Caco-2 (cell line): ENCODE measurements at regions of chrX and their contacts with region 1.

Region 1: DNA sequence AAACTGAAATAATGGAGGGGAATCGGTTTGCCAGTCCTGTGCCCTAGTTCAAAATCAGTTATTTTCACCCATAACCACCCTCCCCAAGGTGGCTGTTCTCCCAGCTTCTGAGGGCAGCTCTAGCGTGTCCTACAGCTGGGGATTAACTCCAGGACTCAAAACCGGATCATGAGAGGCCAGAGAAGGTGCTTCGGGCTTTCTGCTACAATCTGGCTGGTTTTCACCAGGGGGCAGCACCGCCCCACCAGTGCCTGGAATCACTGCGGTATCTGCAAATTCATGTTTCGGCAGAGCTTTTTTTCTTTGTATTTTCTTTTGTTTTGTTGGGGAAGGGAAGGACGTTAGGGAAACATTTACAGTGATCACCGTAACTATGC is 28.4 kb downstream of the PDHA1 start:
- DNase-seq: peak; percentile 55 to 72
- H3K4me3 ChIP-seq: peak overlapping the region; percentile 26
- H3K4me3 Mint-ChIP-seq: peak overlapping the region; percentile 63
- H3K27ac Mint-ChIP-seq: peak overlapping the region; percentile 24
- H3K4me1 ChIP-seq: no peaks in the 10 kb centered on the region
- H3K4me1 Mint-ChIP-seq: no peaks in the 10 kb centered on the region
- H3K27me3 ChIP-seq: no peaks in the 10 kb centered on the region
- H3K27me3 Mint-ChIP-seq: no peaks in the 10 kb centered on the region
- CTCF ChIP-seq: peak; percentile 66 to 72

Region 2: GRCh38 chrX:18129690-18130089 is 1242.5 kb before region 1 on chrX:
- CTCF ChIA-PET with region 1: no interaction called
- POLR2A ChIA-PET with region 1: no interaction called
- intact Hi-C with region 1: no loop called
- DNase-seq: no peak
- H3K4me3 ChIP-seq: no peak overlapping the region
- H3K4me3 Mint-ChIP-seq: no peak overlapping the region
- H3K27ac Mint-ChIP-seq: no peak overlapping the region
- H3K4me1 ChIP-seq: no peaks in the 10 kb centered on the region
- H3K4me1 Mint-ChIP-seq: no peaks in the 10 kb centered on the region
- H3K27me3 ChIP-seq: no peaks in the 10 kb centered on the region
- H3K27me3 Mint-ChIP-seq: peaks cover 6% of the 10 kb centered on the region
- CTCF ChIP-seq: no peak

Region 3: GRCh38 chrX:19212037-19212436 is 160.1 kb before region 1 on chrX:
- CTCF ChIA-PET with region 1: no interaction called
- POLR2A ChIA-PET with region 1: no interaction called
- intact Hi-C with region 1: no loop called
- DNase-seq: no peak
- H3K4me3 ChIP-seq: no peak overlapping the region
- H3K4me3 Mint-ChIP-seq: no peak overlapping the region
- H3K27ac Mint-ChIP-seq: no peak overlapping the region
- H3K4me1 ChIP-seq: no peaks in the 10 kb centered on the region
- H3K4me1 Mint-ChIP-seq: no peaks in the 10 kb centered on the region
- H3K27me3 ChIP-seq: no peaks in the 10 kb centered on the region
- H3K27me3 Mint-ChIP-seq: peaks cover 10% of the 10 kb centered on the region
- CTCF ChIP-seq: no peak

Region 4: DNA sequence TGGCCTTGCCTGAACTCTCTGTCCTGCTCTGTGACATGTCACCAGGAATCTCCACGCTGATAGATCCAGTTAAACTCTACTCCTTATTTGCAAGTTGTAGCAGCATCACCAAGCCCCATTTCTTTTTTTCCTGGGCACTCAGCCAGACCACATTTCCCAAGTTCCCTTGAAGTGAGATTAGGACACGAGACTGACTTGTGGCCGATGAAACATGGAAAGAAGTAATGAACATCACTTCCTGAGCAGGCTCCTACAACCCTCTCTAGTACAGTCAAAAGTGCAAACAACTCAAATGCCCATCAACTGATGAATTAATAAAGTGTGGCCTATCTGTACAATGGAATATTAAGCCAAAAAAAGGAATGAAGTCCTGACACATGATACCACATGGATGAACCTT is 68.6 kb after region 1 on chrX:
- CTCF ChIA-PET with region 1: no interaction called
- POLR2A ChIA-PET with region 1: no interaction called
- intact Hi-C with region 1: no loop called
- DNase-seq: no peak
- H3K4me3 ChIP-seq: no peak overlapping the region
- H3K4me3 Mint-ChIP-seq: no peak overlapping the region
- H3K27ac Mint-ChIP-seq: no peak overlapping the region
- H3K4me1 ChIP-seq: no peaks in the 10 kb centered on the region
- H3K4me1 Mint-ChIP-seq: no peaks in the 10 kb centered on the region
- H3K27me3 ChIP-seq: no peaks in the 10 kb centered on the region
- H3K27me3 Mint-ChIP-seq: no peaks in the 10 kb centered on the region
- CTCF ChIP-seq: no peak

Region 5: GRCh38 chrX:19479458-19479857 is 107.3 kb after region 1 on chrX:
- CTCF ChIA-PET with region 1: no interaction called
- POLR2A ChIA-PET with region 1: no interaction called
- intact Hi-C with region 1: no loop called
- DNase-seq: no peak
- H3K4me3 ChIP-seq: no peak overlapping the region
- H3K4me3 Mint-ChIP-seq: no peak overlapping the region
- H3K27ac Mint-ChIP-seq: no peak overlapping the region
- H3K4me1 ChIP-seq: no peaks in the 10 kb centered on the region
- H3K4me1 Mint-ChIP-seq: no peaks in the 10 kb centered on the region
- H3K27me3 ChIP-seq: no peaks in the 10 kb centered on the region
- H3K27me3 Mint-ChIP-seq: no peaks in the 10 kb centered on the region
- CTCF ChIP-seq: no peak

Region 6: GRCh38 chrX:19514791-19515614 is 142.8 kb after region 1 on chrX and contains the start of gene MAP3K15:
- CTCF ChIA-PET with region 1: interaction called, 3 read pairs
- POLR2A ChIA-PET with region 1: no interaction called
- intact Hi-C with region 1: loop called (anchors 1 kb)
- DNase-seq: peak in 1 of 2 experiments; percentile 59
- H3K4me3 ChIP-seq: peak within 1 kb of the TSS; percentile 43
- H3K4me3 Mint-ChIP-seq: peak within 1 kb of the TSS; percentile 69
- H3K27ac Mint-ChIP-seq: no peak within 1 kb of the TSS
- H3K4me1 ChIP-seq: no peaks in the 10 kb centered on the region
- H3K4me1 Mint-ChIP-seq: no peaks in the 10 kb centered on the region
- H3K27me3 ChIP-seq: no peaks in the 10 kb centered on the region
- H3K27me3 Mint-ChIP-seq: peaks cover 2% of the 10 kb centered on the region
- CTCF ChIP-seq: peak in 1 of 2 experiments; percentile 20
- total RNA-seq, gene MAP3K15: 1.3 and 1.5 TPM in 2 replicates

Region 7: DNA sequence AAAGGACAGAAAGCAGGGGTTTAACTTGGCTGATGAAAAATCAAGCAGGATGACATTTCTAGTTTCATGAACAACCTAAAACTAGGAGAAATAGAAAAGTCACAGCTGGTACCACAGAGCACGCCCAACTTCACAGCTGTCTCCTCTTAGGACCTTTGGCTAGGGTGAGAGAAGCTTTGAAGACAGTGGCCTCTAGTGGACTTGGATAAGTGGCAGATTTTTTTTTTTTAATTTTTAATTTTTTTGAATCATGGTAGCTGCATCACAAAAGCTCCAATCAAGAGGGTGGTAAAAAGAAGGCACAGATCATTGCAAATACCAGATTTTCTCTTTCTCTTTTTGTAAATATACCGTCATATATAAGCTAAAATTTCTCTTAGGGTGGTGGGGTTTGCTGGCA is 163.3 kb after region 1 on chrX:
- CTCF ChIA-PET with region 1: interaction called, 10 read pairs
- POLR2A ChIA-PET with region 1: no interaction called
- intact Hi-C with region 1: loop called (anchors 1 kb)
- DNase-seq: no peak
- H3K4me3 ChIP-seq: no peak overlapping the region
- H3K4me3 Mint-ChIP-seq: no peak overlapping the region
- H3K27ac Mint-ChIP-seq: no peak overlapping the region
- H3K4me1 ChIP-seq: no peaks in the 10 kb centered on the region
- H3K4me1 Mint-ChIP-seq: no peaks in the 10 kb centered on the region
- H3K27me3 ChIP-seq: no peaks in the 10 kb centered on the region
- H3K27me3 Mint-ChIP-seq: no peaks in the 10 kb centered on the region
- CTCF ChIP-seq: peak; percentile 23 to 25